Endothelial cell of umbilical vein (primary cell): ENCODE measurements at regions of chr12 and their contacts with region 1.

Region 1: GRCh38 chr12:47963340-47964040 is at the start of gene TMEM106C:
- DNase-seq: peak; percentile 93
- H3K4me3 ChIP-seq: peak within 1 kb of the TSS; percentile 59 to 87 (median 70)
- H3K27ac ChIP-seq: no peak within 1 kb of the TSS
- H3K4me1 ChIP-seq: peaks cover 7% of the 10 kb centered on the region
- H3K27me3 ChIP-seq: peaks cover under 1 to 4% of the 10 kb centered on the region in 2 experiments
- CTCF ChIP-seq: peak; percentile 98 to 99
- POLR2A ChIP-seq: peak; percentile 25
- total RNA-seq, gene TMEM106C: 67.7 and 84.4 TPM in 2 replicates

Region 2: DNA sequence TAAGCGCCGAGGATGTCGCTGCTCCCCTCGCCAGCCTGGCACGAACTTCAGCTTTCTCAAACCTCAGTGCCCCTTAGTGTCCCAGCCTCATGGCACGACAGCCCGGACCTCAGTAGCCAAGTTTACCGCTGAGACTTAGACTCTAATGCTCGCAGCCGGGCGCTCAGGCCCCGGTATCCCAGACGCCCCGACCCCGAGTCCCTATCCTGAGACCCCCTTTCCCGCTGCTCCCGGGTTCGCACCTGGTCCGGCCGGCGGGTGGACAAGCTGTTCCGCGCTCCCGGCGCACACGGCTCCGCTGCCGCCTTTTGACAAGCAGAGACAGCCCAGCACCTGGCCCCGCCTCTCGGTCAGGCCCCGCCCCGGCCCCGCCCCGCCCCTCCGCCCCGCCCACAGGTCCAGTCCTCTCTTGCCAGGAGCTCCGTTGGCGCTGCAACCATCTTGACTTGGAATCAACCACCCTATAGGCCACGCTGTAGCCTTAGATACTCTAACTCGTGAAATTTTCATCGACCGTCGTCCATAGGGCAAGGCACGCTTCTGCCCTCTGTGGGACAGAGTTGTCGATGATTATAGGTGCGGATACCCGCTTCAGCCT is 58.7 kb before region 1 on chr12 and contains the start of gene VDR:
- CTCF ChIA-PET with region 1: interaction called, 11 read pairs
- POLR2A ChIA-PET with region 1: no interaction called
- dilution Hi-C with region 1: no loop called
- intact Hi-C with region 1: no loop called
- DNase-seq: peak; percentile 61
- H3K4me3 ChIP-seq: peak within 1 kb of the TSS; percentile 36 to 59 (median 44)
- H3K27ac ChIP-seq: no peak within 1 kb of the TSS
- H3K4me1 ChIP-seq: peaks cover 20% of the 10 kb centered on the region
- H3K27me3 ChIP-seq: peaks cover 30 to 34% of the 10 kb centered on the region in 2 experiments
- CTCF ChIP-seq: peak in 1 of 2 donors; percentile 19
- POLR2A ChIP-seq: no peak
- total RNA-seq, gene VDR: 0.48 and 0.73 TPM in 2 replicates

Region 3: DNA sequence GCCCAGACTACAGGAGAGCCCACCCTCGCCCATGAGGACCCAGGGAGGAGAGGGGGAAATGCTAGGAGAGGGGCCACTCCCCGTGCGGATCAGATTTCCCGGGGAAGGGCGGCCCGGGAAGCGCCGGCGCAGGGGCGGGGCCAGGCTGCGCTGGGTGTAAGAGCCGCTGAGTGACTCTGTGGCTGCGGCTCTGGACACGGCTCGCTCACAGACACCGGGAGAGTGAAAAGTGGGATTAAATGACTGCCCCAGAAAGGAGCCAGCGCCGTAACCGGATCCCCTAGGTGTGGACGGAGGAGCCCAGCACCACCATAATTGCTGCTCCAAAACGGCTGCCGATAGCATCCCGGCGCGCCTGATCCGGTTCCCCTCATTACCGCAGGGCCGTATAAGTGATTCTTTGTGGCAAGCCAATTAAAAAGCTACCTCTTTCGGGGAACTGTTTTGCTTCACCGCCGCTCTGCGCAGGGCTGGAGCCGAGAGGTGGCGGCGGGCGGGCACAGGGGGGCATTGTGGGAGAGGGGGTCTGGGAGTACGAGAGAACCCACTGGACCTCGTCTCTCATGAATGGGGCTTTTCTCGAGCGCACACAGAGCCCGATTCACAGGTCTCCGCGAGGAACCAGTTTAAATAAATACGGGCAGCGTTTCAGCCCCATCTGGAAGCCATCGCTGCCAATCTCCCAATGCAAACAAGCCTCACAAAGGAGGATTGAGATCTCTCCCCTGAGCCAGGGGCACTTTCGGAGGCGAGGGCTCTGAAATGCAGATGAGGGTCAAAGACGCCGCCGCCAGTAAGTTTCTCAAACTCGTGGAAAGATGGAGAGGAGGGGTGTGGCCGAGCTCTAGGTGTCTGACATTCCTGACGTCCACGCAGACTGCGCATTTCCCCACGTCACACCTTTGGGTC is 38.3 kb after region 1 on chr12:
- CTCF ChIA-PET with region 1: interaction called, 4 read pairs
- POLR2A ChIA-PET with region 1: no interaction called
- dilution Hi-C with region 1: no loop called
- intact Hi-C with region 1: loop called (anchors 5 kb)
- DNase-seq: peak; percentile 39
- H3K4me3 ChIP-seq: peak overlapping the region; percentile 34 to 66 (median 61)
- H3K27ac ChIP-seq: no peak overlapping the region
- H3K4me1 ChIP-seq: peaks cover 24% of the 10 kb centered on the region
- H3K27me3 ChIP-seq: peaks cover 75 to 93% of the 10 kb centered on the region in 2 experiments
- CTCF ChIP-seq: no peak
- POLR2A ChIP-seq: no peak

Region 4: GRCh38 chr12:48165094-48165981 is 201.8 kb after region 1 on chr12:
- CTCF ChIA-PET with region 1: interaction called, 3 read pairs
- POLR2A ChIA-PET with region 1: no interaction called
- dilution Hi-C with region 1: no loop called
- intact Hi-C with region 1: loop called (anchors 1 kb)
- DNase-seq: peak; percentile 67
- H3K4me3 ChIP-seq: no peak overlapping the region
- H3K27ac ChIP-seq: no peak overlapping the region
- H3K4me1 ChIP-seq: no peaks in the 10 kb centered on the region
- H3K27me3 ChIP-seq: peaks cover 10 to 23% of the 10 kb centered on the region in 2 experiments
- CTCF ChIP-seq: peak; percentile 62 to 80
- POLR2A ChIP-seq: no peak